MCF 10A (cell line): ENCODE measurements at regions of chr1 and their contacts with region 1.

Region 1: DNA sequence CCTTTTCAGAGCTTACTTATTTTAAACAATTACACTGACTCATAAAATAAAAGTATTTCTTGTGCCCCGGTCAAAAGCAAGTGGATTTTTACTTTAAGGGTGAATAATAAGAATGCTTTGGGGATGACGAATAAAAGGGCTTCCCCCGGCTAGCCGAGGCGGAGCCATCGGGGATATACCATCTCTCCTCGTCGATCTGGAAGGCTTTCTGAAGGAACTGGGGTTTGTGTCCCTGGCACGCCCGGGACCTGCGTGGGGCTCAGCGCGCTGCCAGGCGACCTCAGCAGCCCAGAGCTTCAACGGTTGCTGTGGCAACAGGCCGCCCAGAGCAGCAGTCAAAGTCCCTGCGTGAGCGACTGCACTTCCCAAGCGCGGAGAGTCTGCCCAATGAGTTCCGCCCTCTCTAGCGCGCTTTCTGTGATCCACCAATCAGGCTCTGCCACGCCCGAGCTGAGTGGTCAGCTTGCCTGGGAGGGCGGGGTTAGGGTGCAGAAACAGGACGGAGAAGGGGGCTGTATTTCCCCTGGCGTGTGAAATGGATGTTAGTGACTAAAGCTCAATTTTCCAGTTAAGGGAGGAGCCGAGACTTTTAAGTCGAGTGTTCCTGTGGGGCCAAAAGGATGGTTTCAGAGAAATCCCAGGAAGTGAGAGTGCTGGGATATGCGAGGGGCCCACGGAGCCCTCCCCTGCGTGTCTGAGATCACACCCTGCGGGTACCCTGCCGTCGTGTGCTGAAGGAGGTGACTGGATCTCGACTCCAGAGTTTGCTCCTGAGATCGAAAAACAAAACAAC is 33.0 kb upstream of the MGST3 start:
- DNase-seq: peak; percentile 99
- H3K4me3 Mint-ChIP-seq: peak overlapping the region; percentile 89
- H3K27ac Mint-ChIP-seq: peak overlapping the region; percentile 95
- H3K4me1 Mint-ChIP-seq: peaks cover 23% of the 10 kb centered on the region
- H3K27me3 Mint-ChIP-seq: peaks cover 27% of the 10 kb centered on the region
- CTCF ChIP-seq: no peak

Region 2: GRCh38 chr1:165129568-165130164 is 468.4 kb before region 1 on chr1:
- CTCF ChIA-PET with region 1: interaction called, 17 read pairs
- POLR2A ChIA-PET with region 1: no interaction called
- intact Hi-C with region 1: no loop called
- DNase-seq: peak; percentile 91
- H3K4me3 Mint-ChIP-seq: no peak overlapping the region
- H3K27ac Mint-ChIP-seq: no peak overlapping the region
- H3K4me1 Mint-ChIP-seq: peaks cover 5% of the 10 kb centered on the region
- H3K27me3 Mint-ChIP-seq: peaks cover 82% of the 10 kb centered on the region
- CTCF ChIP-seq: peak; percentile 79

Region 3: GRCh38 chr1:165392634-165393571 is 205.2 kb before region 1 on chr1:
- CTCF ChIA-PET with region 1: interaction called, 557 read pairs
- POLR2A ChIA-PET with region 1: interaction called, 4 read pairs
- intact Hi-C with region 1: loop called (anchors 1 kb)
- DNase-seq: peak; percentile 88
- H3K4me3 Mint-ChIP-seq: peak overlapping the region; percentile 47
- H3K27ac Mint-ChIP-seq: no peak overlapping the region
- H3K4me1 Mint-ChIP-seq: peaks cover 18% of the 10 kb centered on the region
- H3K27me3 Mint-ChIP-seq: peaks cover 83% of the 10 kb centered on the region
- CTCF ChIP-seq: peak; percentile 98

Region 4: DNA sequence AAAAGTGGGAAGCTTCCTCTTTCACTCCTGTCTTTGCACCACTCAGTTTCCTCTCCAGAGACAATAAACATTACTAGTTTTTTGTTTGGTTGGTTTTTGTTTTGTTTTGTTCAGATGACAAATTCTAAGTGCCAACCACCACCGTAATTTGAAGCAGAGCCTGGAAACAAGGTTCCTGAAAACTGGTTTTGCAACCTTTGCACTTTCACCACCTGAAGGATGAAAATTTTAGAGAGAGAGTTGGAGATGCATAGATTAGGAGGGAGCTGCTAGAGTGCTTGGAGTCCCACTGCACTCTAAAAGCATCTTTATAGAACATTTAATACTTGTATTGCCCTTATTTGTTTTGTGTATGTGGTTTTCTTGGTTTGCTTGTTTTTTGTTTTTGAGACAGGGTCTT is 12.8 kb after region 1 on chr1:
- CTCF ChIA-PET with region 1: interaction called, 57 read pairs
- POLR2A ChIA-PET with region 1: interaction called, 6 read pairs
- intact Hi-C with region 1: no loop called
- DNase-seq: no peak
- H3K4me3 Mint-ChIP-seq: no peak overlapping the region
- H3K27ac Mint-ChIP-seq: no peak overlapping the region
- H3K4me1 Mint-ChIP-seq: no peaks in the 10 kb centered on the region
- H3K27me3 Mint-ChIP-seq: peaks cover 5% of the 10 kb centered on the region
- CTCF ChIP-seq: no peak

Region 5: DNA sequence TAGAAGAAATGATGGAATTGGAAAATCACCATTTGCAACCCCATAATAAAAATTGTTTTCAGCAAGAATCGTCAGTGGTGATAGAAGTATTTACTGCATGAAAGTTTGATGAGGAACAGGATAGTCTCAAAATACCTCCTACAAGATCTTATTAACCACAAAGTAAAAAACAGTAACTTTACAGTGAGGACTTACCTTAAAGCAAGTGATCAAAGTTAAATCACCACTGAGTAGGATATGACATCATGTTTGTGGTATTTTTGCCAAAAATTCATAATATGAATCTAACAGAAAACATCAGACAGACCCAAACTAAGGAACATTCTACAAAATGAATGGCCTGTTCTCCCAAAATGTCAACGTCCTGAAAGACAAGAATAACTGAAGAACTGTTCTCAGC is 80.4 kb after region 1 on chr1:
- CTCF ChIA-PET with region 1: interaction called, 11 read pairs
- POLR2A ChIA-PET with region 1: interaction called, 3 read pairs
- intact Hi-C with region 1: no loop called
- DNase-seq: no peak
- H3K4me3 Mint-ChIP-seq: no peak overlapping the region
- H3K27ac Mint-ChIP-seq: no peak overlapping the region
- H3K4me1 Mint-ChIP-seq: peaks cover 6% of the 10 kb centered on the region
- H3K27me3 Mint-ChIP-seq: no peaks in the 10 kb centered on the region
- CTCF ChIP-seq: no peak

Region 6: GRCh38 chr1:165768513-165769394 is 170.7 kb after region 1 on chr1 and contains the start of gene TMCO1:
- CTCF ChIA-PET with region 1: interaction called, 17 read pairs
- POLR2A ChIA-PET with region 1: interaction called, 5 read pairs
- intact Hi-C with region 1: no loop called
- DNase-seq: peak; percentile 100
- H3K4me3 Mint-ChIP-seq: peak within 1 kb of the TSS; percentile 95
- H3K27ac Mint-ChIP-seq: peak within 1 kb of the TSS; percentile 98
- H3K4me1 Mint-ChIP-seq: peaks cover 46% of the 10 kb centered on the region
- H3K27me3 Mint-ChIP-seq: no peaks in the 10 kb centered on the region
- CTCF ChIP-seq: no peak
- total RNA-seq, gene TMCO1: 158 and 202 TPM in 2 replicates

Region 7: GRCh38 chr1:165974598-165975131 is 376.6 kb after region 1 on chr1:
- CTCF ChIA-PET with region 1: no interaction called
- POLR2A ChIA-PET with region 1: no interaction called
- intact Hi-C with region 1: no loop called
- DNase-seq: no peak
- H3K4me3 Mint-ChIP-seq: no peak overlapping the region
- H3K27ac Mint-ChIP-seq: no peak overlapping the region
- H3K4me1 Mint-ChIP-seq: no peaks in the 10 kb centered on the region
- H3K27me3 Mint-ChIP-seq: no peaks in the 10 kb centered on the region
- CTCF ChIP-seq: no peak